ENCODE measurements at regions of chr1 and their contacts with region 1.

Region 1: DNA sequence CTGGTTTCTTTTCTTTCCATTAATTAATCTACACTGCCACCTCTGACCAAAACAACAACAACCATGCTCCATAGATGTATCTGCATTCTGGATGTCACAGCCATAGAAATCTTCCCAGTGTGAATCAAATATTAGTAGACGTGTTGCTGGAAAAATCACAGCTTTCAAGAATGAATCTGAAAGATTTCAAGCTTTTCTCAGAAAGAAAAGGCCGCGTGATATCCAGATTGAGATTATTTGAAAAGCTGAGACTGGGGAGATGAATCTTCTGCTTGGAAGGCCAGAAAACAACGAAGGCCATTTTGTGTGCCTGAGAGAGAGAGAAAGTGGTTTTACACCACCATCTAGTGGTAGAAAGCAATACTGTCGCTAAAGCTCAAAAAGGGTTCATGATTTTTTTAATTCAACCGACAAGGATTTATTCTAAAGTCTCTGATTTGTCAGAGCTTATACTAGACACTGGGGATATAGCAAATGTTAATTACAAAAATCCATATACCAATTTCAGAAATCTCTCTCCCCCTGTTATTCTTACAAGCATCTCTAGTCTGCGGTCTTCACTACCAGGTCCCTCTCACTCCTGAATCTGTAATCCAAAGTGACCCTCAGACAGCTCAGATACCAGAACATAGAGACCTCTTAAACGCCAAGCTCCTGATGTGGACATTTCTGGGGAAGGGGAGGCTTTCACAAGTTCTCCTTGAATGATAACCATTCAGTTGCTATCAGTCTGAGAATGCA is 87.5 kb upstream of the SGIP1 start:
- DNase-seq: no peak
- H3K4me3 ChIP-seq: no peak overlapping the region
- H3K27ac ChIP-seq: no peak overlapping the region
- H3K4me1 ChIP-seq: peaks cover 9% of the 10 kb centered on the region
- H3K27me3 ChIP-seq: no peaks in the 10 kb centered on the region
- CTCF ChIP-seq: peak; percentile 63 to 87 (median 81)
- POLR2A ChIP-seq: no peak

Region 2: GRCh38 chr1:65958561-65959350 is 487.7 kb before region 1 on chr1:
- intact Hi-C with region 1: loop called (anchors 5 kb)
- DNase-seq: no peak
- H3K4me3 ChIP-seq: no peak overlapping the region
- H3K27ac ChIP-seq: no peak overlapping the region
- H3K4me1 ChIP-seq: no peaks in the 10 kb centered on the region
- H3K27me3 ChIP-seq: no peaks in the 10 kb centered on the region
- CTCF ChIP-seq: peak; percentile 65 to 94 (median 83)
- POLR2A ChIP-seq: no peak

Region 3: GRCh38 chr1:66478116-66478515 is 31.7 kb after region 1 on chr1:
- intact Hi-C with region 1: no loop called
- DNase-seq: no peak
- H3K4me3 ChIP-seq: no peak overlapping the region
- H3K27ac ChIP-seq: no peak overlapping the region
- H3K4me1 ChIP-seq: no peaks in the 10 kb centered on the region
- H3K27me3 ChIP-seq: no peaks in the 10 kb centered on the region
- CTCF ChIP-seq: no peak
- POLR2A ChIP-seq: no peak